ENCODE measurements at regions of chr7 and their contacts with region 1.

Region 1: DNA sequence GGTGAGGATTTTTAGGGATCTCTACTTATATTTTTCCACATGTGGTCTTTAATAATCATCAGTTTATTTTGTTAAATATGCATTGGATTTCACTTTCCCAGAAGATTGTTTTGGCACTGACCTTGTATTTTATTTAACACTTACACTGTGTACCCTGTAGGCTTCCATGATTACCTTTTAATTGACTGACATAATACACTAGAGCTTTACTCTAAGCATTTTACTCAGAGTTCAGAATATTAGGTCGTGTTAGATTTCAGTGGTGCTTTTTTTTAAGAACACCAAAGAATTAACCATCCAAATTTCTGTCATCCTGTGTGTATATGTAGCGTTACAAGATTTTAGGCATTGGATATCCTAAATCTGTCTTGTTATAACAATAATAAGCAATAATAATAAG is 23.1 kb downstream of the CASD1 start:
- DNase-seq: no peak
- ATAC-seq: no peak
- H3K4me3 ChIP-seq: no peak overlapping the region
- H3K4me3 Mint-ChIP-seq: no peak overlapping the region
- H3K27ac ChIP-seq: no peak overlapping the region
- H3K27ac Mint-ChIP-seq: no peak overlapping the region
- H3K4me1 ChIP-seq: no peaks in the 10 kb centered on the region
- H3K4me1 Mint-ChIP-seq: no peaks in the 10 kb centered on the region
- H3K27me3 ChIP-seq: no peaks in the 10 kb centered on the region
- H3K27me3 Mint-ChIP-seq: no peaks in the 10 kb centered on the region
- CTCF ChIP-seq: no peak

Region 2: GRCh38 chr7:94547126-94547525 is 14.4 kb after region 1 on chr7:
- CTCF ChIA-PET with region 1: no interaction called
- POLR2A ChIA-PET with region 1: no interaction called
- intact Hi-C with region 1: loop called (anchors 2 kb)
- DNase-seq: no peak
- ATAC-seq: no peak
- H3K4me3 ChIP-seq: no peak overlapping the region
- H3K4me3 Mint-ChIP-seq: no peak overlapping the region
- H3K27ac ChIP-seq: no peak overlapping the region
- H3K27ac Mint-ChIP-seq: no peak overlapping the region
- H3K4me1 ChIP-seq: no peaks in the 10 kb centered on the region
- H3K4me1 Mint-ChIP-seq: no peaks in the 10 kb centered on the region
- H3K27me3 ChIP-seq: no peaks in the 10 kb centered on the region
- H3K27me3 Mint-ChIP-seq: no peaks in the 10 kb centered on the region
- CTCF ChIP-seq: no peak

Region 3: GRCh38 chr7:94561841-94562514 is 29.3 kb after region 1 on chr7:
- CTCF ChIA-PET with region 1: no interaction called
- POLR2A ChIA-PET with region 1: no interaction called
- intact Hi-C with region 1: no loop called
- DNase-seq: no peak
- ATAC-seq: no peak
- H3K4me3 ChIP-seq: no peak overlapping the region
- H3K4me3 Mint-ChIP-seq: no peak overlapping the region
- H3K27ac ChIP-seq: no peak overlapping the region
- H3K27ac Mint-ChIP-seq: peak overlapping the region; percentile 16
- H3K4me1 ChIP-seq: peaks cover 8 to 13% of the 10 kb centered on the region in 2 donors
- H3K4me1 Mint-ChIP-seq: peaks cover 12% of the 10 kb centered on the region
- H3K27me3 ChIP-seq: no peaks in the 10 kb centered on the region
- H3K27me3 Mint-ChIP-seq: no peaks in the 10 kb centered on the region
- CTCF ChIP-seq: no peak

Measured in B cell (primary cell).